Ovary (tissue), 10 donors: ENCODE measurements at regions of chr7 and their contacts with region 1.

Region 1: GRCh38 chr7:104779888-104780287 is 234.1 kb upstream of the KMT2E start:
- DNase-seq: no peak
- H3K4me3 ChIP-seq: no peak overlapping the region
- H3K27ac ChIP-seq: no peak overlapping the region
- H3K4me1 ChIP-seq: no peaks in the 10 kb centered on the region
- H3K27me3 ChIP-seq: no peaks in the 10 kb centered on the region
- CTCF ChIP-seq: no peak
- EP300 ChIP-seq: no peak
- POLR2A ChIP-seq: no peak

Region 2: DNA sequence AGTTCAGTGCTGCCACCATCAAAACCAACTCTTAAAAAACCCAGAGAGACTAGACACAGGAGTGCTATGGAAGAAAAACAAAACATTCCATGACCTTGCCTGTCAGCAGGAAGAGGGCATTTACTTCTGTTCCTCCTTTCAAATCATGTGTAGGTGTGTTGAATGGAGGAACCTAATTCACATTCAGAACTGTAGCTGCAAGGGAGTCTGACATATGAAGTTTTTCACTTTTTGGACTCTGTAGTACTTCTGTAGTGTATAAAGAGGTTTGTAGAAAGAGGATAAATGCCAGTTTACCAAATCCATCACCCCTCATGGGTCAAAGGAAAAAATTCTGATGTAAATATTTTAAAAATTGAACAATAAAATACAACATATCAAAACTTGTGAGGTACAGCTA is 1383.4 kb after region 1 on chr7:
- intact Hi-C with region 1: loop called in 1 of 4 experiments (anchors 5 kb)
- DNase-seq: no peak
- H3K4me3 ChIP-seq: no peak overlapping the region
- H3K27ac ChIP-seq: no peak overlapping the region
- H3K4me1 ChIP-seq: peaks cover 3% of the 10 kb centered on the region
- H3K27me3 ChIP-seq: no peaks in the 10 kb centered on the region
- CTCF ChIP-seq: no peak
- EP300 ChIP-seq: no peak
- POLR2A ChIP-seq: no peak